ENCODE measurements at regions of chr3 and their contacts with region 1.

Region 1: DNA sequence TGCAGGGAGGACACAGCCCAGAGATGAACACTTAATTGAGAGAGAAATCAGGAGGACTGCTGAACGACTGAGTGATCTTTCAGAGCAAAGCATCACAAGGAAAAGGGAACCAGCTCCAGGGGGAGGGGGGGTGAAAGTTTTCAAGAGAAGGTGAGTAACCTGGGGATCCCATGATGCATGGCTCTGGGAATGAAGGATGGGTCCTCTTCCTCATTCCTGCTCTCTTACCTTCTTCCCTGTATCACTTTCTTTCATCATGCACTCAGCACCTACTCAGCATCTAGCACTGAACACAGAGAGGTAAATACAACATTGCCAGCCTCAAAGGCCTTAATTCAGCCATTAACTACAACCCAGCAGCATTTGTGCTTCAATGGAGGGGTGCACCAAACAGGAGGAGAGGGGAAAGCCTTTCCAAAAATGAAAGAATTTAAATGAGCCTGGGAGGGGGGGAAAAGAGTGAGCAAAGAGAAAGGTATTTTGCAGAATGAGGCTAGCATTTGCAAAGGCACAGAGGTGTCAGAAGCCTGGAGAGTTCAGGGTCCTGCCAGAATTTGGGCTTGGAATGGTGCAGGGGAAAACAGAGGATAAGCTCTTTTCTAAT is 427.4 kb downstream of the FOXP1 start:
- DNase-seq: peak; percentile 64
- H3K4me3 ChIP-seq: no peak overlapping the region
- H3K27ac ChIP-seq: no peak overlapping the region
- H3K4me1 ChIP-seq: peaks cover 9% of the 10 kb centered on the region
- H3K27me3 ChIP-seq: no peaks in the 10 kb centered on the region
- CTCF ChIP-seq: no peak

Region 2: DNA sequence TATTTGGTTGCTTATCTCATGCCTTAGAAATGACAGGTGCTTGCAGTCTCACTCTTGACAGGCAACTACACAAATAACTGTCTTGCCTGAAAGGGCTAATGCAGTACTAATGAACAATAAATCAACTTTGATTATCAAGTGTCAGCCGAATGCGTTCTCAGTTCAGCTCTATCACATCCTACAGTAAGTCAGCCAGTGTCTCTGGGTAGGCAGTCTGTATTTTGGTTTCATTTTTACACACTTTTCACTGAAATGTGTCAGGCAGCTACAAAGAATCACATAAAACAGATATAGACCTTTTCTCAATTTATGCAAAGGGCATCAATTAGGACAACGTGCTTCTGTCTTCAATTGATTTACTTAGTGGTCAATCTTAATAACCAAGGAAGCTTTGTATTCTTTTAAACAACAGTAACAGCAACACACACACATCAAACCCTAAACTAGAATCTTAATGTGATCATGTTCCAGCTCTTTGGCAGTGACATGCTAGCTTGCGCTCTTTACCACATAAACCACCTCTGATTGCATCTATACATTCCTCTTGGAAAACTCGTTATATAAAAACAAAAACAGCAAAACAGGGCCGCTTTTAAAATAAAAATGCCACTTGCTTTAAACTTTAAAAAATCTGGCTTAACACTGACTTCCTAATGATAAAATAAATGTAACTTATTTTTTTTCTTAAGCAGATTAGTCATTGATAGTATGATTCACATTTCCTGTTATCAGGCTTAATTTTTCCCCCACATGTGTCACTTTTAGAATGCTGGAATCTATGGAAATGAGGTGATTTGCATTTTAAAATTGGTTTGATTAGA is 93.0 kb before region 1 on chr3:
- CTCF ChIA-PET with region 1: no interaction called
- dilution Hi-C with region 1: no loop called
- in situ Hi-C with region 1: no loop called
- intact Hi-C with region 1: no loop called
- DNase-seq: peak; percentile 65
- H3K4me3 ChIP-seq: peak overlapping the region; percentile 62 to 83 (median 63)
- H3K27ac ChIP-seq: peak overlapping the region; percentile 98
- H3K4me1 ChIP-seq: peaks cover 57% of the 10 kb centered on the region
- H3K27me3 ChIP-seq: no peaks in the 10 kb centered on the region
- CTCF ChIP-seq: no peak

Region 3: DNA sequence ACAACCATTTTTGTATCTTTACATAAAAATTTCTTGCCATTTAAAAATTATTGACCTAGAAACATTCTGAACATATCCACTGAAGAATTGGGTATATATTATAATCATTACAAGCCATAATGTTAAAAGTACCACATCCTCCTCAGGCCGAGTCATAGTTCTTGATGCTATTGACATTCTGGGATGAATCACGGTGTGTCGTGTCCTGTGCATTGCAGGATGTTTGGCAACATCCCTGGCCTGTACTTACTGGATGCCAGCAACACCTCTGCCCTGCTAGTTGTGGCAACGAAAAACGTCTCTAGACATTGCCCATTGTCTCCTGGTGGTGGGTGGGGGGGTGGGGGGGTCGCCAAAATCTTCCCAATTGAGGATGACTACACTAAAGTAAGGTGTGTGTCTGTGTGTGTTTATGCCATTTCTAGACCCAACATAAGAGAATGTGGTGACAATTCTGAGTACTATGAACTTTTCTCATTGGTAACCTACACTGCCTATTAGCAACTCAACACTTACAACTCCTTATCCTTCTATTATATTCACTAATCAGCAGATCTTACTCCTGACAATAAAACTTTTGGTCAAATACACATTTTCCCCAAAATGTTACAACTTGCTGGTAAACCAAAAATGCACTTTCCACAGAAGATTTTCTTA is 44.3 kb before region 1 on chr3:
- CTCF ChIA-PET with region 1: no interaction called
- dilution Hi-C with region 1: no loop called
- in situ Hi-C with region 1: no loop called
- intact Hi-C with region 1: loop called (anchors 1 kb)
- DNase-seq: peak; percentile 89
- H3K4me3 ChIP-seq: no peak overlapping the region
- H3K27ac ChIP-seq: peak overlapping the region; percentile 67
- H3K4me1 ChIP-seq: peaks cover 23% of the 10 kb centered on the region
- H3K27me3 ChIP-seq: no peaks in the 10 kb centered on the region
- CTCF ChIP-seq: no peak

Region 4: DNA sequence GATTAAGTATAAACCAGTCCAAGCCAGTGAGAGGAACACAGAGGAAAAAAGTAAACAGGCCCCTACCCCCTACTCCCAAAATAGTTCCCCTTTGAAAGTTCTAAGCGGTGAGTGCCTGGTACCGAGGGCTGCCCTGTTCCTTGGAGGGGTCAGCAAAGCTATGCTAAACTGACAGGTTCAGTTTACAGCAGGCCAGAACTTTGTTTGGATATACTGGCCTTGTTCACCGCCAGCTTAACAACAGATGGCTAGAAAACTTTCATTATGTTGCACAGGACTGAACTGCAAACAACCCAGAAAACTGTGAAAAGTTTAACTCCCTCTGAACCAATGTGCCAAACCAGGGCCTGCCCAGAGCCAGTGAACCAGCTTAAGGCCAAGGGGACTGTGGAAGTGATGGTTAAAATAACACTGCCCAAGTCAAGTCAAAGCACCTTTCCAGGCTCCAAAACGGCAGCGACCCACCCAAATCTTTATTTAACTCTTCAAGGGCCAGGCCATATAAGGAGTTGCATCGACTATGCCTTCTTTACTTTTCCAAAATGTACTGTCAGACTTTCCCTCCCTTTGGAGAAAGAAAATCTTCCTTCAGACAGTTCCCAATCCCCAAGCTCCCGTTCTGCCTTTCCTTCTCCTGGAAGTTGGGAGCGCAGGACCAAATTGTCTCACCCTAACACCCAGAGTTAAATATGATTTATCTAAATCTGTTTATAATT is 20.6 kb before region 1 on chr3:
- CTCF ChIA-PET with region 1: no interaction called
- dilution Hi-C with region 1: no loop called
- in situ Hi-C with region 1: no loop called
- intact Hi-C with region 1: loop called (anchors 2 kb)
- DNase-seq: no peak
- H3K4me3 ChIP-seq: no peak overlapping the region
- H3K27ac ChIP-seq: no peak overlapping the region
- H3K4me1 ChIP-seq: peaks cover 4% of the 10 kb centered on the region
- H3K27me3 ChIP-seq: no peaks in the 10 kb centered on the region
- CTCF ChIP-seq: no peak

Region 5: DNA sequence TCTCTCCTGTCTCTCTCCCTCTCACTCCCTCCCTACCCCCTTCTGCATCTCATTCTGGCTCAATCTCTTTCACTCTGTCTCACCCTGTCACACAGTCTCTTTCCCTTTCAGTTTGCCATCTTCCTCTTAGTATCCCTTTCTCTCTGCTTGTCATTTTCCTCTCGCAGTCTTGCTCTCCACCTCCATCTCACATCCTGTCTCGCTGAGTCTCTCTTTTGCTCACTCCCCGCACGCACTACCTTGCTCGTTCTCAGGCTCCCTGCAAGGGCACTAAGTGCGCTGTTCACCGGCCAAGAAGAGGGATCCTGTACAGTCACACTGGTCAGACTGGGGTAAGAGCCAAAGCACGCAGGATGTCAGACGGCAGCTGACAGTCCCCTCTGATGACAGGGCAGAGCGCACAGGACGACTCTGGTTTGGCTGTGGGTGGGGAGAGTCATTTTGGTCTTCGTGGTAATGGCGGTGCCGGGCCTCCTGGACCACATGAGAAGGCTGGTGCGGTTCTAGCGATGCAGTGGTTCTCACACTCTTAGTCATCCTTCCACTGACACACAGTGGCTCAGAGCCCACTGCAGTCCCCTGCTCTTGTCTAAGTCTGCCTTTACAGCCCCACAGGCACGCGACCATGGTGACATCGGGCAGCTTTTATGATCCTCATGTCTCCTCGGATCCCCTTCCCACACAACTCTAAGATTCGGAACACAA is 70.6 kb after region 1 on chr3:
- CTCF ChIA-PET with region 1: no interaction called
- dilution Hi-C with region 1: no loop called
- in situ Hi-C with region 1: no loop called
- intact Hi-C with region 1: no loop called
- DNase-seq: no peak
- H3K4me3 ChIP-seq: no peak overlapping the region
- H3K27ac ChIP-seq: no peak overlapping the region
- H3K4me1 ChIP-seq: no peaks in the 10 kb centered on the region
- H3K27me3 ChIP-seq: no peaks in the 10 kb centered on the region
- CTCF ChIP-seq: no peak

Region 6: DNA sequence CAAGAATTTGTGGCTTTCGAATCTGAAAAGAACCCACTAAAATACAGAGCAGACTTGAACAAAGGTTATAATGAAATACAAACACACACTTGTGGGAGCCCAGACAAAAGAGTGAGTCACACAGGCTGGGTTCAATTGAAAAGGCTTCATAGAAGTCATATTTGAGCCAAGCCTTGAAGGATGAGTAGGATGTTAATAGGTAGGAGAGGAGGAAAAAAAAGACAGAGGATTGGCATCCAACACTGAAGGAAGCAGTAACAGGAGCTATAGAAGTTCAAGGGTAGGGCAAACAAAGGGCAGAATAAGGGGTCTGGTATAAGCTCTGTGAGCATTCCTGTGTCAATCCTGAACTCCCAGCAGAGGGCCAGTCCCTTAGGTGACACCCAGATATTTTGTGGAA is 102.0 kb after region 1 on chr3:
- CTCF ChIA-PET with region 1: no interaction called
- dilution Hi-C with region 1: no loop called
- in situ Hi-C with region 1: no loop called
- intact Hi-C with region 1: no loop called
- DNase-seq: peak; percentile 92
- H3K4me3 ChIP-seq: no peak overlapping the region
- H3K27ac ChIP-seq: peak overlapping the region; percentile 12
- H3K4me1 ChIP-seq: peaks cover 16% of the 10 kb centered on the region
- H3K27me3 ChIP-seq: no peaks in the 10 kb centered on the region
- CTCF ChIP-seq: no peak

Measured in mammary epithelial cell (primary cell).